Right ventricle myocardium inferior (tissue), 1 donor: ENCODE measurements at regions of chr11 and their contacts with region 1.

Region 1: GRCh38 chr11:66222358-66223149 is 45.9 kb upstream of the RAB1B start:
- DNase-seq: peak; percentile 96
- ATAC-seq: peak; percentile 89

Region 2: GRCh38 chr11:66172143-66172542 is 50.4 kb before region 1 on chr11:
- intact Hi-C with region 1: no loop called
- DNase-seq: no peak
- ATAC-seq: no peak

Region 3: GRCh38 chr11:66183494-66184048 is 39.0 kb before region 1 on chr11:
- intact Hi-C with region 1: no loop called
- DNase-seq: no peak
- ATAC-seq: no peak

Region 4: DNA sequence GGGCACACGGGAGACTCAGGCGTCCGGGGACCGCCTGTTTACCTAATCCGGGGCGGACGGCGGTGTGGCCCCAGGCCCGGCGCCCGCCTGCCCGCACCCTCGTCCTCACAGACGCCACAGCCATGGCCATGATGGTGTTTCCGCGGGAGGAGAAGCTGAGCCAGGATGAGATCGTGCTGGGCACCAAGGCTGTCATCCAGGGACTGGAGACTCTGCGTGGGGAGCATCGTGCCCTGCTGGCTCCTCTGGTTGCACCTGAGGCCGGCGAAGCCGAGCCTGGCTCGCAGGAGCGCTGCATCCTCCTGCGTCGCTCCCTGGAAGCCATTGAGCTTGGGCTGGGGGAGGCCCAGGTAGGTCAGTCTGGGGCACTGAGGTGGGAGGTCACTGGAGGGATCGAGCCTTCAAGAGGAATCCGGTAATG is 35.9 kb after region 1 on chr11:
- intact Hi-C with region 1: loop called (anchors 1 kb)
- DNase-seq: no peak
- ATAC-seq: peak; percentile 1

Region 5: DNA sequence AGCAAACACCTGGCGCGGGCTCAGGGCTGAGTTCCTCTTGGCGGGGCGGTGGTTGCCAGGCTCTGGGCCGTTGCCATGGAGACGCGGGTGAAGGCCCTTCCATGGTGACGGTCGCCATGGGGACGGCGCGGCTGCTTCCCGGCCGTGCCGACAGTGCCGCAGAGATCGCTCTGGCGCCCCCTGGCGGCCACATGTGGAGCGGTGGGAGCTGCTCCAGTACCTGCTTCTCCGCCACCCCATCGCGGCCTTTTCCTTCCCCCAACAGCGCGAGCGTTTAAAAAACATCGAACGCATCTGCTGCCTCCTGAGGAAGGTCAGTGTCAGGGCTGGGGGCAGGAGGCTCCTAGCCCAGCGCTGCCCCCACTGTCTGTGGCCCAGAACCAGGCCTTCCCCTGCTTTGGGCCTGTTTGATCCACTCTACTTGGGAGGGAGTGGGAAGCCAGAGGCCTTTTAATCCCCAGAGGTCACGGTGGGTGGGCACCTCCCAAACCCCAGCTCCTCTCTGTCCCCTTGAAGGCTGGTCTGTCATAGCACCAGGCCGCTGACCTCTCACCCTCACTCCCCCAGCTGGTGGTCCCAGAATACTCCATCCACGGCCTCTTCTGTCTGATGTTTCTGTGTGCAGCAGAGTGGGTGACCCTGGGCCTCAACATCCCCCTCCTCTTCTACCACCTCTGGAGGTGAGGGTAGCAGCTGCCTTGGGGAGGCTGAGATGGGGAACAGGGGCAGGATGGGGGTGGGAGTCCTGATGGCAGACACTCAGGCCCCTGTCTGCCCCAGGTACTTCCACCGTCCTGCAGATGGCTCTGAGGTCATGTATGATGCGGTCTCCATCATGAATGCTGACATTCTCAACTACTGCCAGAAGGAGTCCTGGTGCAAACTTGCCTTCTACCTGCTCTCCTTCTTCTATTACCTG is 60.2 kb after region 1 on chr11:
- intact Hi-C with region 1: loop called (anchors 1 kb)
- DNase-seq: peak; percentile 99
- ATAC-seq: peak; percentile 84

Region 6: GRCh38 chr11:66336234-66337102 is 113.9 kb after region 1 on chr11 and contains the start of gene RIN1:
- intact Hi-C with region 1: loop called (anchors 5 kb)
- DNase-seq: peak; percentile 66
- ATAC-seq: peak; percentile 69
- total RNA-seq, gene RIN1: 1.6 TPM

Region 7: DNA sequence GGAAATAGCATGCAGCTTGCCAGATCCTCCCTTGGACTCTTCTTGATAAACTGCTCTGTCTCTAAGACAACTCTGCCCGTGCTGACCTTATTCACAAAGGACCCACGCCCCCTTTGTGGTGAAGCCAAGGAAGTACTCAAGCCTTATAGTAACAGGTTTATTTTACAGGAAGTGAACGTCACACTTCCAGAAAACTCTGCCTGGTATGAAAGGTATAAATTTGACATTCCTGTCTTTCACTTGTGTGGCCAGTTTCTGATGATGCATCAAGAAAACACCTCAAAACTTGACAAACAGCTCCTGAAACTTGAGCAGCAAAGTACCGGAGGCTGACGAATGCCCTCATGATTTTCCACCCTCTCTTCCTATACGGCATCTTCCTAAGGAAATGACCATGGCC is 231.7 kb after region 1 on chr11:
- intact Hi-C with region 1: no loop called
- DNase-seq: no peak
- ATAC-seq: no peak